SK-N-SH (cell line): ENCODE measurements at regions of chr1 and their contacts with region 1.

Region 1: DNA sequence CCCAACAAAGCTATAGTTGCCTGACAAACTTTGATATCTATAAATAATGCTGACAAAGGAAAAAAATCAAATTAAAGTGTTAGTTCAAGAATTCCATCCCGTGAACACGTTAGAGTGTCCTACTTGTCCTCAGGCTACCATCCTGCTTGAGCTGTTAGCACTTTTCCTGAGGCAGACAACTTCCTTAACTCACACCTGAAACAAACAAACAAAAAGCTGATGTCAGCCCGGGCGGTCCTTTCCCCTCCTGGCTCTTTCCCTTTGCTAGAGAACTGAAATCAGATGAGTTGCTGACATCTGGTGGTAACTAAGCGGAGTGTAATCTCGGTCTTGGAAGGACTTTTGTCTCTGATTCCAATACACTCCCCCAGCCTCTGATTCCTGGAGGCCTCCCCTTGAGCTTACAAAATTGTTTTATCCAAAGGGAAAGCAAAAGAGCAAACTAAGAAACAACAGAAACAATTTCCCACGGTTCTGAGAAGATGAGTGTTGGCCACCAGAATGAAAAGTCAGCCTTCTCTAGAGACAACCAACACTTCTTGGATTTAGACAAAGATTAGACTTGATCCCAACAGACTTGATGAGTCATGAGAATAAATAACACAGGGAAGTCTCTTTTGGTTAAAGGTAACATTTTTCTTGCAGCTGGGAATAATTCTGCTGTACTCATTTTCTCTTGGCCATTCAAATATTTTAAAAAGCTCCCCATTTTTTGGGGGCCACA is 135.4 kb downstream of the PROX1 start:
- DNase-seq: peak; percentile 76
- H3K4me3 ChIP-seq: peak overlapping the region in 1 of 2 experiments; percentile 49; a peak in 1 of 4 replicates
- H3K27ac ChIP-seq: peak overlapping the region in 1 of 2 experiments; percentile 39; a peak in 2 of 4 replicates
- H3K4me1 ChIP-seq: peaks cover 0 to 10% of the 10 kb centered on the region in 2 experiments; a peak in 2 of 4 replicates
- H3K27me3 ChIP-seq: no peaks in the 10 kb centered on the region
- CTCF ChIP-seq: peak; percentile 62
- EP300 ChIP-seq: no peak
- RAD21 ChIP-seq: peak; percentile 98

Region 2: DNA sequence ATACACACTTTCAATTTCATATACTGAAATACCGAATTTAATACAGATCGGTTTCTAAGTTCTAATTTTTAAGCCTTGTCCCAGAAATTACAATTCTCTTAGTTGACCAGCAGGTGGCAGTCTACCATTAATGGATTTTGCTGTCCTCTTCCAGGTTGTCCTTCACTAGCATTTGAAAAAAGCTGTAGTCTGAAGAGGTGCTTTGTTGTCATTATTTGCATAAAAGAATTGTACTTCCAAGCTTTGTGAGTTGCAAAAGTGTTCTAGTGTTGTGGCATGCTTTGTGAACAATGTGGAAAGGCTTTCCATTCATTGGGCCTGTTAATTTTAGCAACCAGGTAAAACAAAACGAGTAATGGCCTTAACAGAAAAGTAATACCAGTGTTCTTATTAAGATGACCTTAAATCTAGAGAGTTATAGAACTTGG is 878.5 kb before region 1 on chr1:
- CTCF ChIA-PET with region 1: interaction called, 17 read pairs
- POLR2A ChIA-PET with region 1: no interaction called
- DNase-seq: peak; percentile 16
- H3K4me3 ChIP-seq: no peak overlapping the region; a peak in 1 of 4 replicates
- H3K27ac ChIP-seq: no peak overlapping the region; a peak in 1 of 4 replicates
- H3K4me1 ChIP-seq: no peaks in the 10 kb centered on the region; a peak in 1 of 4 replicates
- H3K27me3 ChIP-seq: no peaks in the 10 kb centered on the region
- CTCF ChIP-seq: peak; percentile 90
- EP300 ChIP-seq: no peak
- RAD21 ChIP-seq: peak; percentile 85

Region 3: DNA sequence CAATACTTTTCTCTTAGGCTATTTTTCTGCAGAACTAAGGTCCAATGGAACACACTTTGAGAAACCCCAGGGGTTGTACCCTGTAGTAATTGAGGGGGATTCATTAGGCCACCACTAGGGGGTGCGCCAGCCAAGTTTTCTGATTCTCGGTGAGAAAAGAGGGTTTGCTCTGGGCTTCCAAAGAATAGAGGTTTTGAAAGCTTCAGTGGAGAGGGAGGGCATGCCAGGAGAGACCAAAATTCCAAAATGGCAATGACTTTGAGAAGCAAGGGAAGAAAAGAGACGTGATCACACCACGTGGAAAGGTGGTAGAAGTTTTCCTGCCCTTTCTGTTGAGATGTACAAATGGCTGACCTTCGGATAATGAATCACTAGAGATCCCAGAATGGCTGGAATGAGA is 748.9 kb before region 1 on chr1:
- CTCF ChIA-PET with region 1: interaction called, 35 read pairs
- POLR2A ChIA-PET with region 1: no interaction called
- DNase-seq: peak; percentile 81
- H3K4me3 ChIP-seq: peak overlapping the region in 1 of 2 experiments; percentile 51; a peak in 1 of 4 replicates
- H3K27ac ChIP-seq: no peak overlapping the region
- H3K4me1 ChIP-seq: peaks cover 0 to 5% of the 10 kb centered on the region in 2 experiments; a peak in 1 of 4 replicates
- H3K27me3 ChIP-seq: no peaks in the 10 kb centered on the region
- CTCF ChIP-seq: peak; percentile 84
- EP300 ChIP-seq: no peak
- RAD21 ChIP-seq: peak; percentile 93

Region 4: DNA sequence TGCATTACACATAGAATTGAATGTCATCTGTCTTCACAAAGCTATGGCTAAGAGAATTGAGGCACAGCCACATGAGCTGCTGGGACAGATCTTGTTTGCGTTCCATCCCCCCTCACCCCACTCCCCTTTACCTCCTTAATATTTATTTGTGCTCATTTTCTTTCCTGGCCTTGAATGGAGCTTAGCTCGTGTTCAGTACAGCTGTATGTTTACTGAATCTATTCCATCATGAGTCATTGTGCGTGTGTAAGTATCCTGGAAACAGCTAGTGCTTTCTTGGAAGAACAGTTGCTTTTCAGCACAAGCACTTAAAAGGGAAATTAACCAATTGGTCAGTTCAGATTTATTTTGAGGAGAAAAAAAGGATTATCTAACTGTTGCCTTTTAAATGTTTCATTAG is 120.8 kb before region 1 on chr1:
- CTCF ChIA-PET with region 1: interaction called, 11 read pairs
- POLR2A ChIA-PET with region 1: no interaction called
- DNase-seq: no peak
- H3K4me3 ChIP-seq: no peak overlapping the region
- H3K27ac ChIP-seq: peak overlapping the region in 1 of 2 experiments; percentile 98; a peak in 2 of 4 replicates
- H3K4me1 ChIP-seq: peaks cover 0 to 52% of the 10 kb centered on the region in 2 experiments; a peak in 2 of 4 replicates
- H3K27me3 ChIP-seq: no peaks in the 10 kb centered on the region
- CTCF ChIP-seq: no peak
- EP300 ChIP-seq: no peak
- RAD21 ChIP-seq: no peak

Region 5: DNA sequence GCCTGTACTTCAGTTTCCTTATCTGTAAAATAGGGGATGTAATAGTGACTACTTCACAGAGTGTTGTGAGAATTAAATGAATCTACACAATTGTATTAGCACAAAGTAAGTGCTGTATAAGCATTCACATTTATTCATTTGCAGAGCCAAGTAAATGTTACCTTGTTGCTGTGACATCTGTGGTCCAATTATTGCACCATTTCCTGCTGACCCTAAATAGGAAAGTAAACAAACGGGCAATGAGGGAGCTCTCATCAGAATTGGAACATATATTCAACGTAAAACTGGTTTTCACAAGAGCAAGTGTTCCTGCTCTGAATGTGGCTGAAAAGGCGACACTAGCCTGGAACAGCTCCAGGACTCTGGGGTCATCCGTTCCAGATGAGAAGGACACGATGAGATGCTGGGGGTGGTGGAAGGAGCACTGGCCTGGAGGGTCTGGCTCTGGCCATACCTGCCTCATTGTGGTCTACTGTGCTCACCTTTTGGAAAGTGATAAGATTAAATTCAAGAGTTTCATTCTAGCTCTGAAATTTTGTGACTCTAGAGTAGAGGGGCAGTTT is 100.9 kb before region 1 on chr1:
- CTCF ChIA-PET with region 1: interaction called, 14 read pairs
- POLR2A ChIA-PET with region 1: no interaction called
- DNase-seq: no peak
- H3K4me3 ChIP-seq: no peak overlapping the region
- H3K27ac ChIP-seq: peak overlapping the region in 1 of 2 experiments; percentile 92; a peak in 2 of 4 replicates
- H3K4me1 ChIP-seq: peaks cover 0 to 46% of the 10 kb centered on the region in 2 experiments; a peak in 2 of 4 replicates
- H3K27me3 ChIP-seq: no peaks in the 10 kb centered on the region
- CTCF ChIP-seq: no peak
- EP300 ChIP-seq: no peak
- RAD21 ChIP-seq: no peak

Region 6: GRCh38 chr1:214135886-214136285 is 12.7 kb after region 1 on chr1:
- CTCF ChIA-PET with region 1: interaction called, 10 read pairs
- POLR2A ChIA-PET with region 1: no interaction called
- DNase-seq: no peak
- H3K4me3 ChIP-seq: no peak overlapping the region
- H3K27ac ChIP-seq: no peak overlapping the region
- H3K4me1 ChIP-seq: no peaks in the 10 kb centered on the region; a peak in 1 of 4 replicates
- H3K27me3 ChIP-seq: no peaks in the 10 kb centered on the region
- CTCF ChIP-seq: no peak
- EP300 ChIP-seq: no peak
- RAD21 ChIP-seq: no peak

Region 7: DNA sequence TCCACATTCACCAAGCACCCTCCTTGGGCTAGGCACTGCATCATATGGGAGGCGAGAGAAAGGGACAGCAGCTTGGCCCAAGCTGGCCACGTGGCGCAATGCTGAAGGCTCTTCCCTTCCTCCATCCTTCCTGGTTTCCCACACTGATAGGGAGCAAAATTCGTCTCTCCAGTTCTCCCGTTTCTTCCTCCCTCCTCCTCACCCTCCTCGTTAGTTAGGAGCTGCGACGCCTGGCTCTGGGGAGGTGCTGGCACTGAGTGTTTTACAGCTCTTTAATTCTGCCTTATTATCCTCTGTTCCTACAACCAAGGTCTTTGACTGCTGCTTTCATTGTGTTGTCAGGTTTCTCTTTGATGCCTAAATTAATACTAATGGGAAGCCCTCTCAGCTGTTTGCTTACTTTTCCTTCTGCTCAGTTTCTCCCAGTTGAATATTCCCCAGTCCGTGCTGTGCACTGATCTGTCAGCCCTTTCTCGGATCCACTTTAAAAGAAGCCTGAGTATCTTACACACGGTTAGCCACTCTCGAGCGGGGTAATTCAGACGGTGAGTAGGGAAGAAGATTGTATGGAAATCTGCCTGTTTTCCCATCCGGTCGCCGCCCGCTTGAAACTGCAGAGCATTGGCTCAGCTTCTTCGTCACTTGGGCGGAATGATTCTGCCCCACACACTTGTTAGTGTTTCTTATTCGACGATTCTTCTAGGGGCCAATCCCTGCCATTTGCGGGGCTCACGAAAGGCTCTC is 101.6 kb after region 1 on chr1:
- CTCF ChIA-PET with region 1: no interaction called
- POLR2A ChIA-PET with region 1: no interaction called
- DNase-seq: no peak
- H3K4me3 ChIP-seq: no peak overlapping the region
- H3K27ac ChIP-seq: no peak overlapping the region
- H3K4me1 ChIP-seq: peaks cover 0 to 2% of the 10 kb centered on the region in 2 experiments; a peak in 1 of 4 replicates
- H3K27me3 ChIP-seq: no peaks in the 10 kb centered on the region; the same call in 1 of the 2 replicates
- CTCF ChIP-seq: no peak
- EP300 ChIP-seq: no peak
- RAD21 ChIP-seq: no peak

Region 8: DNA sequence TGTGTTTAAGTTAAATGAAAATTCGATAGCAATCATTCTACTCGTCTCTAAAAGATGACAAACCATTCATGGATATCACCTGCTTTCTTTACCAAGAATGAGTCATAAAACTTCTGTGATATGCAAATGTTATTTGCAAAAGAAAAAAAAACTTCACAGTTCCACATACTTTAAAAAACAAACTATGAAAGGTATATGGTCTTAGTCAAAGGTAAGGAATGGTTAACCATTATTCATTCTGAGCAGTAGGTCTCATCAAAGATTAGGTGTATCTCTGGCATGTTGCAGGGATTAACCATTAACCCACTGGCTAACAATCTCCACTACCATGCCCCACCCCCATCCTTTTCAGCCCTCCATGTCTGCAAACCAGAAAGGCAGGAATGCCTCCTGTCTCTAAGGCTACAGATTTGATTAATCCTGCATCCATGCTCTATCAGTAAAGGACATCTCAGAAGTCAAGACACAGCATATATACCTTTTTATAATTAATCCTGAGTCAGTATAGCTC is 383.8 kb after region 1 on chr1:
- CTCF ChIA-PET with region 1: no interaction called
- POLR2A ChIA-PET with region 1: no interaction called
- DNase-seq: no peak
- H3K4me3 ChIP-seq: no peak overlapping the region
- H3K27ac ChIP-seq: no peak overlapping the region
- H3K4me1 ChIP-seq: peaks cover 6 to 29% of the 10 kb centered on the region in 2 experiments; a peak in 3 of 4 replicates
- H3K27me3 ChIP-seq: no peaks in the 10 kb centered on the region
- CTCF ChIP-seq: no peak
- EP300 ChIP-seq: no peak
- RAD21 ChIP-seq: no peak